CD4-positive, alpha-beta memory T cell (primary cell): ENCODE measurements at regions of chr10 and their contacts with region 1.

Region 1: DNA sequence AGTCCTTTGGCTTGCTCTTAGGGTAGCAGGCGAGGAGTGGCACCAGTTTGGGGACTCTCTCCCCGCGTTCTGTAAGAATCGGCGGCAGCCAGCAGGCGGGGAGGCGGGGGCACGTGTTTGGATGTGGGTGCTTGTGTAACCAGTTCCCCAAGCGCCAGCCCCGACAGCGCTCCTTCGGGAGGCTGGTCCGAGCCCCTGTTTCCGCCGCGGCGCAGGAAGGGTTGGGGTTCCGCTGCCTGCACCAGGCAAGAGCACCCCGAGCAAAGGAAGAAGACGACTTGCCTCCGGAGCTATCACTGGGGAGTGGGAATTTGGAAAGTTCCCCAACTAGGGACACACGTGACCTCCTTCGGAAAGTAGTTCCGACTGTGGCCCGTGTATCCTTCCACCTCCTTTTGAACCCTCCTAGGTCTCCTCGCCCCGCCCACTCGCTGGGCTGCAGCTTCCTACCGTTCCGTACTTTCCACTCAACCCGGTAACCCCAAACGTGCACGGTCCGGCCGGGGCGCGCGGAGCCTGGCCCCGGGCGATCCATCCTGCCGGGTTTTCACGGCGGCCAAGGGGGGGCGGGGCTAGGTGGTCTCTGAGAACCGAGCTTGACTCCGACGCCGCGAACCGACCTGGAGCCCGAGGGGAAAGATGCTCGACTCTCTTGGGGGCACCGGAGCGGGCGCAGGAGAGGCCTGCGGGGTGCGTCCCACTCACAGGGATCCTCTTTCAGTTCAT is 1.2 kb downstream of the KLLN start:
- DNase-seq: peak; percentile 92 to 96 (median 94)
- H3K4me3 ChIP-seq: peak overlapping the region; percentile 91 to 95
- H3K4me3 Mint-ChIP-seq: peak overlapping the region; percentile 95 to 99 (median 97)
- H3K27ac ChIP-seq: peak overlapping the region; percentile 69
- H3K27ac Mint-ChIP-seq: peak overlapping the region; percentile 93 to 99 (median 96)
- H3K4me1 ChIP-seq: peaks cover 35% of the 10 kb centered on the region
- H3K4me1 Mint-ChIP-seq: peaks cover 25 to 60% (median 32%) of the 10 kb centered on the region in 4 donors
- H3K27me3 ChIP-seq: no peaks in the 10 kb centered on the region
- H3K27me3 Mint-ChIP-seq: peaks cover 0 to 3% of the 10 kb centered on the region in 2 donors

Region 2: GRCh38 chr10:87817609-87818504 is 44.3 kb before region 1 on chr10 and contains the start of gene ATAD1:
- CTCF ChIA-PET with region 1: interaction called, 12 read pairs
- POLR2A ChIA-PET with region 1: interaction called, 72 read pairs
- intact Hi-C with region 1: loop called (anchors 1 kb)
- DNase-seq: peak; percentile 89 to 91 (median 91)
- H3K4me3 ChIP-seq: peak within 1 kb of the TSS; percentile 85 to 95
- H3K4me3 Mint-ChIP-seq: peak within 1 kb of the TSS; percentile 88 to 98 (median 94)
- H3K27ac ChIP-seq: peak within 1 kb of the TSS; percentile 94
- H3K27ac Mint-ChIP-seq: peak within 1 kb of the TSS; percentile 94 to 99 (median 98)
- H3K4me1 ChIP-seq: peaks cover 46% of the 10 kb centered on the region
- H3K4me1 Mint-ChIP-seq: peaks cover 27 to 43% (median 35%) of the 10 kb centered on the region in 4 donors
- H3K27me3 ChIP-seq: no peaks in the 10 kb centered on the region
- H3K27me3 Mint-ChIP-seq: no peaks in the 10 kb centered on the region
- total RNA-seq, gene ATAD1: 46.5 to 52.0 TPM

Region 3: GRCh38 chr10:87945984-87946383 is 83.9 kb after region 1 on chr10:
- CTCF ChIA-PET with region 1: interaction called, 3 read pairs
- POLR2A ChIA-PET with region 1: no interaction called
- intact Hi-C with region 1: loop called (anchors 5 kb)
- DNase-seq: no peak
- H3K4me3 ChIP-seq: no peak overlapping the region
- H3K4me3 Mint-ChIP-seq: no peak overlapping the region
- H3K27ac ChIP-seq: no peak overlapping the region
- H3K27ac Mint-ChIP-seq: peak overlapping the region in 1 of 7 donors; percentile 22
- H3K4me1 ChIP-seq: no peaks in the 10 kb centered on the region
- H3K4me1 Mint-ChIP-seq: peaks cover 7 to 12% (median 9%) of the 10 kb centered on the region in 4 donors
- H3K27me3 ChIP-seq: no peaks in the 10 kb centered on the region
- H3K27me3 Mint-ChIP-seq: no peaks in the 10 kb centered on the region

Region 4: DNA sequence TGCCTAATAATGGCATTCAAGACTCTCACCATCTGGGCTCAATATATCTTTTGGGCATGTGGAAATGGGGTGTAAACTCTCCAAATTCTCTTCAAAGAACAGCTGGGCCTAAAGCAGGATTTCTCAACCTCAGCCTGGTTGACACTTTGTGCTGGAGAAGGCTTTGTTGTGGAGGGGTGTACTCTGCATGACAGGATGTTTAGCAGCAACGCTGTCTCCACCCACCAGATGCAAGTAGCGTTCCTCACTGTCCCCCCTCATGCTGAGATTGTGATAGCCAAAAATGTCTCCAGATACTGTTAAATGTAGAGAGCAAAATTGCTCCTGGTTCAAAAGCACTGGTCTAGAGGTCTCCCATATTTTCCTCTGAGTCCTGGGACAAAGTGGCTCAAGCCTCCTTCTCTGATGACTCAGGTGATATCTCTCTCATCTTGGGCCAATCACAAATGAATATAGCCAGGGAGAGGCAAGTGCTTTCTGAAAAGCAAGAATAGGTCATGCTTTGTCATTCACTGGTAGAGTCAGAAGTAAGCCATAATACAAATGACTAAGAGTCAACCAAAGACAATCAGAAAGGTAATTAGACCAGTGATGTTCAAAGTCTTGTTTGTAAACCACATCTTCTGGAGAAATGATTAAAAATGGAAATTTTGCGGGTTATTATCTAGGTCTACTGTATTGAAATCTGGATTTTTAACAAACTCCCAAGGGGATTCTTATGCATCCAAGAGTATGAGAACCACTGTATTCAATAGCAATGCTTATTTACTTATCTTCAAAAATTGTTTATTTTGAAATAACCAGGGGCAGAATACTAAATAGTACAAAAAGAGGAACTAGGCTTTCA is 332.1 kb after region 1 on chr10:
- CTCF ChIA-PET with region 1: interaction called, 3 read pairs
- POLR2A ChIA-PET with region 1: interaction called, 29 read pairs
- intact Hi-C with region 1: loop called (anchors 2 kb)
- DNase-seq: peak; percentile 64 to 80 (median 77)
- H3K4me3 ChIP-seq: peak overlapping the region in 1 of 2 donors; percentile 8
- H3K4me3 Mint-ChIP-seq: peak overlapping the region; percentile 8 to 84 (median 78)
- H3K27ac ChIP-seq: no peak overlapping the region
- H3K27ac Mint-ChIP-seq: peak overlapping the region; percentile 76 to 95 (median 89)
- H3K4me1 ChIP-seq: peaks cover 40% of the 10 kb centered on the region
- H3K4me1 Mint-ChIP-seq: peaks cover 32 to 54% (median 43%) of the 10 kb centered on the region in 4 donors
- H3K27me3 ChIP-seq: no peaks in the 10 kb centered on the region
- H3K27me3 Mint-ChIP-seq: no peaks in the 10 kb centered on the region

Region 5: GRCh38 chr10:88456730-88457129 is 594.6 kb after region 1 on chr10:
- CTCF ChIA-PET with region 1: no interaction called
- POLR2A ChIA-PET with region 1: no interaction called
- intact Hi-C with region 1: loop called (anchors 5 kb)
- DNase-seq: no peak
- H3K4me3 ChIP-seq: no peak overlapping the region
- H3K4me3 Mint-ChIP-seq: no peak overlapping the region
- H3K27ac ChIP-seq: no peak overlapping the region
- H3K27ac Mint-ChIP-seq: no peak overlapping the region
- H3K4me1 ChIP-seq: no peaks in the 10 kb centered on the region
- H3K4me1 Mint-ChIP-seq: peaks cover 0 to 3% (median under 1%) of the 10 kb centered on the region in 4 donors
- H3K27me3 ChIP-seq: no peaks in the 10 kb centered on the region
- H3K27me3 Mint-ChIP-seq: no peaks in the 10 kb centered on the region

Region 6: DNA sequence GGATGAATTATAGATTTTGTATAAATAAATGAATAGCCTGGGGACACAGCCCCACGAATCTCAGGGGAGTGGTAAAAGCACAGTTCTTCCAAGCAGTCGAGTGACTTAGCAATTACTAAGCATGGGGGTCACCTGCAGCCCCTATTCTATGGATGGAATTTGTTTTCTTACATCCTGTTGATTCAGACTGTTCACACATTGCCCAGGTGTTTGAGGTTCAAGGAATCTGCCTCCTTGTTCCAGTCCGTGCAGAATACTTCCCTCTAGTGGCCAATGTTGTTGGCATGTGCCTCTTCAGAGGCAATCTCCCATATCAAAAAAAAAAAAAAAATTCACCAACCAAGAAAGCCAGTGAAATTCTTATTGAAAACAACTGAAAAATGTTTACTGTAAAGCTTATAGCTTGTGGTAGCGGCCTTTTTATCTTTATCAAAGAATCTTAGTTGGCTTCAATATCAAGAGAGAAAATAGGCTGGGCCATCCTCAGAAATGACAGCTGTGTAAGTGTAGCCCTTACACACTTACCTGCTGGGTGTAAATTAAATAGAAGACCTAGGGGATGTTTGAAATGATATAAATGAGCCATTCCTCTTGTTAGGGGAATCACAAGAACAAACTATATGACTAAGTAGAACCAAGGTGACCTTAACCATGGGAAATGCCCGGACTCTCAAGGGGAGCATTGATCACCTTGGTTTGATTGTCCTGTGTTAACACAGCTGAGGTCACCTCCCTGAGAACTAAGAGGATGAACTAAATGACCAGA is 948.3 kb after region 1 on chr10:
- CTCF ChIA-PET with region 1: no interaction called
- POLR2A ChIA-PET with region 1: no interaction called
- intact Hi-C with region 1: loop called (anchors 5 kb)
- DNase-seq: peak; percentile 42 to 56 (median 45)
- H3K4me3 ChIP-seq: no peak overlapping the region
- H3K4me3 Mint-ChIP-seq: no peak overlapping the region
- H3K27ac ChIP-seq: no peak overlapping the region
- H3K27ac Mint-ChIP-seq: peak overlapping the region in 2 of 7 donors; percentile 16 to 30
- H3K4me1 ChIP-seq: peaks cover 10% of the 10 kb centered on the region
- H3K4me1 Mint-ChIP-seq: peaks cover 10 to 18% (median 15%) of the 10 kb centered on the region in 4 donors
- H3K27me3 ChIP-seq: no peaks in the 10 kb centered on the region
- H3K27me3 Mint-ChIP-seq: no peaks in the 10 kb centered on the region